ENCODE measurements at regions of chr16 and their contacts with region 1.

Region 1: DNA sequence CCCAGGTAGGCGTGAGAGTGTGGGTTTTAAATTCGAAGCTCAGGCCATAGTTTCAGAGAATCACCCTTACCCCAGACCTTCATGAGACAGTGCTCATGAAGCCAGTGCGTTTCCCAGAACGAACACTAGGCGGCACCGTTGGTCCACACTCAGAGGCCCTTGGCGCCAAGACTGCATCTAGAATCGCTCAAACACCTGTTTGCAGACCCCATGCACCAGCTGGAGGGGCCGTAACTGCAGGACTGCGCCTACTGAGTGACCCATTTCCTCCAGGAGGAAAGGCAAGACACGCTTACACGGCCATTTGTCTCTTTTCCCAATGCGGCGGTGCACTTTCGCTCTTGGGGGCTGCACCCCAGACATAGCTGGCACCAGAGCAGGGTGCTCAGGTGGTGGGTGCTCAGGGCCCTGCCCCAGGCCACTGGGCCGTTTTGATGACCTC is 34.0 kb downstream of the ADGRG5 start:
- DNase-seq: peak; percentile 95
- H3K4me3 Mint-ChIP-seq: no peak overlapping the region
- H3K27ac Mint-ChIP-seq: peak overlapping the region; percentile 96
- H3K4me1 Mint-ChIP-seq: peaks cover 52% of the 10 kb centered on the region
- H3K27me3 Mint-ChIP-seq: no peaks in the 10 kb centered on the region

Region 2: DNA sequence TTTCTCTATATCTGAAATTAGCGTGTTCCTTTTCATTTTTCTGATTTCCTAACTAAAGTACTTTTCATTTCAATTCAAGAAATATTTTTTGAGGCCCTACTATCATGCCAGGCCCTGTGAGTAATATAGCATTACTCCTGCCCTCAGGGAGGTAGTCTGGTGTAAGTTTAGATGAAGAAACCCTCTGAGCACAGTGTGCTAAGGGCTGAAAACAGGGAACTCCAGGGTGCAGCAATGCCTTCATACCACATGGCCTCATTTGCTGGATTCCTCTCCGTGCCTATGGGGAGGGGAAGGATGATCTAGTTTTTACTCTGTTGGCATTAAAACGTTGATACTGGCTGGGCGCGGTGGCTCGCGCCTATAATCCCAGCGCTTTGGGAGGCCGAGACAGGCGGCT is 124.4 kb before region 1 on chr16:
- intact Hi-C with region 1: no loop called
- DNase-seq: no peak
- H3K4me3 Mint-ChIP-seq: no peak overlapping the region
- H3K27ac Mint-ChIP-seq: no peak overlapping the region
- H3K4me1 Mint-ChIP-seq: peaks cover 12% of the 10 kb centered on the region
- H3K27me3 Mint-ChIP-seq: no peaks in the 10 kb centered on the region

Region 3: GRCh38 chr16:57535680-57536305 is 40.7 kb before region 1 on chr16:
- intact Hi-C with region 1: loop called (anchors 2 kb)
- DNase-seq: peak; percentile 98
- H3K4me3 Mint-ChIP-seq: peak overlapping the region; percentile 86
- H3K27ac Mint-ChIP-seq: peak overlapping the region; percentile 89
- H3K4me1 Mint-ChIP-seq: peaks cover 63% of the 10 kb centered on the region
- H3K27me3 Mint-ChIP-seq: no peaks in the 10 kb centered on the region

Region 4: GRCh38 chr16:57591086-57591869 is 14.8 kb after region 1 on chr16:
- intact Hi-C with region 1: loop called (anchors 1 kb)
- DNase-seq: peak; percentile 90
- H3K4me3 Mint-ChIP-seq: peak overlapping the region; percentile 79
- H3K27ac Mint-ChIP-seq: peak overlapping the region; percentile 94
- H3K4me1 Mint-ChIP-seq: peaks cover 37% of the 10 kb centered on the region
- H3K27me3 Mint-ChIP-seq: no peaks in the 10 kb centered on the region

Region 5: DNA sequence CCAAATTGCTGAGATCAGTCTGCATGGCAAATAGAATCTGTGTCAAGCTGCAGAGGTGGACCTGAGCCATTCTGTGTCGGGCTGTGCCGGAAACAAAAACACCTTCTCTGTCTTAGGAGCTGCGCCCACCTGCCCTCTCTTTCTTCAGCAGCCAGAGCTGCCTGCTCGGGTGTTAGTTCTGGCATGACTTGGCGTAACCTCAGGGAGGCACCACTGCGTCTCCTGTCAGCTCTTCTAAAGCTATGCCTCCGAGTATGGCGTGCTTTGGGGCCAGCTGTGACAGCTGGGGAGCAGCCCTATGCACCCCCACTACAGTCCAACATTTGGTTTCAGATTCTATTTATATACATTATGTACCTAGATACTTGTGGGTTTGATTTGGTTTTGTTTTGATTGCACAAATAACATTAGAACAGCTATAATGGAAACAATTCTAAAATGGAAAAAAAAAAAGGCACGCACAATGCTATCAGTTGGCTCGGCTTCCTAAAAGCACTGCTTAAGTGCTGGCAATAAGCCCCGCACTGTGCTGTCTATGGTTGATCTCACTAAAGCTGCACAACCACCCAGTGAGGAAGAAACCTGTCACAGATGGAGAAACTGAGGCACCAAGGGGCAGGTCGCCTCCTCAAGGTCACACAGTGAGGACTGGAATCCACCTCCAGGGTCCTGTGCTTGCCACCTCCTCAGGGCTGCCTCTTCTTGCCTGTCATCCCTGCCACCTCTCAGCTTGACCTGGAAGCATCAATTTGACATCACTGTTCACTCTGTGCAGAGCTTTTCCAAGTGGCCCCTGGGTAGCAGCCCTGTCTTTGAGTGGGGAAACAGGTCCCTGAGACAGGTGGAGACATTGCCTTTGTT is 33.3 kb after region 1 on chr16:
- intact Hi-C with region 1: loop called (anchors 2 kb)
- DNase-seq: peak; percentile 92
- H3K4me3 Mint-ChIP-seq: peak overlapping the region; percentile 71
- H3K27ac Mint-ChIP-seq: peak overlapping the region; percentile 98
- H3K4me1 Mint-ChIP-seq: peaks cover 45% of the 10 kb centered on the region
- H3K27me3 Mint-ChIP-seq: no peaks in the 10 kb centered on the region

Region 6: GRCh38 chr16:57720142-57720575 is 143.7 kb after region 1 on chr16:
- intact Hi-C with region 1: loop called (anchors 1 kb)
- DNase-seq: peak; percentile 86
- H3K4me3 Mint-ChIP-seq: no peak overlapping the region
- H3K27ac Mint-ChIP-seq: no peak overlapping the region
- H3K4me1 Mint-ChIP-seq: no peaks in the 10 kb centered on the region
- H3K27me3 Mint-ChIP-seq: peaks cover 6% of the 10 kb centered on the region

Region 7: DNA sequence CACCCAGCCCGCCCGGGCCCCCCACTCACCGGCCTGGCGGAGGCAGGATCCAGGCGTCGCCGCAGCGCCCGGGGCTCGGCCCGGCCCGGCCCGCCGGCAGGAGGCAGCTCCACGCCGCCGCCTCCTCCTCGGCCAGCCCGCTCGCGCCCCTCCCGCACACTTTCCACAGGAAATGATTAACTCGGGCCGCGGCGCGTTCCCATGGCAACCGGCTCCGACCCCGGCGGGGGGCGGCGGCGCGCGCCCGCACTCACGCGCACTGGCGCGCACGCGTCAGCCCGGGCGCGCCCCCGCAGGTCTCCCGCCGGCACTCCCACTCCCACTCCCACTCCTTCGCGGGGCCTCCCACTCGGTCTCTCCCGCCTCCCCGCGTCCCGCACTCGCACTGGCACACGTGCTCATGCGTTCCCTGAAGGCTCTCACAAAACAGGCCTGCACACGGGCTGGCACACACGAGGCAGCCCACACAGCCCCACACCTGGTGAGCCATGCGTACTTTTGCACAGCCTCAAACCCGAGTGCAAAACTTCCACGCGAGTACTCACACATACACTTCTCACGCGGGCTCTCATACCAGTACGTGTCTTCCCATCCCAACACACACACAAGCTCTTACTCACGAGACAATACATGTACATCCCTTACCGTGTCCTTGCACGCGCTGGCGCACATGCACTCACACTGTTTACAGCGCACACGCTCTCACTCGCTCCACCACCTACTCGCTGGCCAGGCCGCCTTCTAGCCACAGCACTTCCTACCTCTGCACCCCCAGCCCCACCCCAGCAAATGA is 226.1 kb after region 1 on chr16 and contains the start of gene KIFC3:
- intact Hi-C with region 1: loop called (anchors 10 kb)
- DNase-seq: peak; percentile 91
- H3K4me3 Mint-ChIP-seq: peak within 1 kb of the TSS; percentile 87
- H3K27ac Mint-ChIP-seq: peak within 1 kb of the TSS; percentile 89
- H3K4me1 Mint-ChIP-seq: peaks cover 27% of the 10 kb centered on the region
- H3K27me3 Mint-ChIP-seq: peaks cover 68% of the 10 kb centered on the region
- total RNA-seq, gene KIFC3: 0.58 and 1.7 TPM in 2 replicates